ENCODE measurements at regions of chr5 and their contacts with region 1.

Region 1: GRCh38 chr5:94538260-94538659 is 80.1 kb downstream of the KIAA0825 start:
- DNase-seq: no peak
- ATAC-seq: no peak
- H3K4me3 ChIP-seq: no peak overlapping the region
- H3K27ac ChIP-seq: no peak overlapping the region
- H3K4me1 ChIP-seq: no peaks in the 10 kb centered on the region
- H3K27me3 ChIP-seq: no peaks in the 10 kb centered on the region
- CTCF ChIP-seq: no peak

Region 2: DNA sequence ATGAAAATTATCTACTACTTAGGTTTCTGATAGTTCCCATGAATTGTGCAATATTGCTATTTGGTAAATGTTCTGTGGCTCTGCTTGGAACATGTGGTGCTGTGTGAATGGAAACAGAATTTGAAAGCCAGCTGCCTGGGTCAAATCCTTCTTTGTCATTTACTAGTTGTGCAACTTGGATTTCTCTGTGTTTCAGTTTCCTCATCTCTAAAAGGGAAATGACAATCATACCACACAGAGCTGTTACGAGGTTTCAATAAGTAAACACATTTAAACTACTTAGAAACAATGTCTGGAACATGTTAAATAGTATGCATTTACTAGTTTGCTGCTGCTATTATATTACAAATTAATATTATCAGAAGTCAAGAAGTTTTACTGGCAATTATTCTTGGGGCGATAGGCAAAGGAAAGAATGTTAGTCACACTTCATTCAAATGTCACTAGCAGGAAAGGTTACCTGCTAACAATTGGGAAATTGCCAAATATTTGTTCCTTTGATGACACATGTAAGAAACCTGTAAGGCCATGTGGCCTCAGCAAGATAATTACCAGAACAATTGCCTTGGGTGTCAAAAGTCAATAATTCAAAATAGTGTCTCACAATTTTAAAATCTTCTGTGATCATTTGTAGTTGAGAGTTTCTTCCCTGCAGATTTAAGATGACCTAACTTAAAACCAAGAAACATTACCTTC is 104.7 kb before region 1 on chr5:
- intact Hi-C with region 1: no loop called
- DNase-seq: peak in 3 of 6 donors; percentile 12 to 68 (median 24)
- ATAC-seq: peak; percentile 83 to 90 (median 88)
- H3K4me3 ChIP-seq: no peak overlapping the region
- H3K27ac ChIP-seq: peak overlapping the region in 2 of 4 donors; percentile 16 to 70
- H3K4me1 ChIP-seq: peaks cover 5 to 23% (median 7%) of the 10 kb centered on the region in 3 donors
- H3K27me3 ChIP-seq: no peaks in the 10 kb centered on the region
- CTCF ChIP-seq: no peak

Region 3: DNA sequence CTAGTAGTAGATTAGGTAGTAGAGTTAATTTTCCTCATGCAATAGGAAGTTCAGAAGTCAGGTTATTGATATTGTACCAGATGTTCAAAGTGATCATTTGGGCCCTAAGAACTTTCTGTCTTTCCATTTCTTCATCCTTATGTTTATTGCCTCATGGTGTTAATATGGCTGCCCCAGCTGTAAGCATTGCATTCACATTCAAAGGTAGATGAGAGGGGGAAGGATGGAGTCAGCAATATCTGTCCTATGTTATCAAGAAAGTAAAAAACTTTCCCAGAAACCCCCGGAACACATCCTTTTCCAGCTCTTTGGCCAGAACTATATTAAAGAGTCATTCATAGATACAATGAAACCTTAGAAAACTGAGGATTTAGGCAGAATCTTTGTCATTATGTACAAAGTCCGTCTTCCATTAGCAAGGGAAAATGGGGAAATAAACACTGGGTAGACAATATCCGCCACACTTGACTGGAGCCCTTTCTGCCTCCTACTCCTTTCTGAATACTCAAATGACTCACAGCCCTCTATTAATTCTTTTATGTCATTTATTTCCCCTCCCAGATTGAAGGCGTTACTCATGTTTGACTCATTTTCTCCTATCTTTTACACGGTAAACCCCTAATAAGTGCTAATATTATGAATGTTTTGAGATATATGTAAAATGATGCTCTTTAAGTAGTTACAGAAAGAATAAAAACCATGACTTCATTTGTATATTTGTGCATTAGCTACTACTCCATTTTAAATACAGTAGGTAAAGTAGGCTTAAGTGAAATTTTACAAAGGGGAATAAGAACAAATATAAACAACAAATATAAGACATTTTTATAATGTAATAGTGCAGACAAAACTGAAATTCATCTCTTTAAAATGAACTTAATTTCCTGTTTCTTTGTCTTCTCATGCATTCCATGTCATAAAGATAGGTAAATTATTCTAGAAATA is 207.8 kb after region 1 on chr5:
- intact Hi-C with region 1: loop called in 1 of 3 experiments (anchors 10 kb)
- DNase-seq: no peak
- ATAC-seq: no peak
- H3K4me3 ChIP-seq: no peak overlapping the region
- H3K27ac ChIP-seq: no peak overlapping the region
- H3K4me1 ChIP-seq: no peaks in the 10 kb centered on the region
- H3K27me3 ChIP-seq: no peaks in the 10 kb centered on the region
- CTCF ChIP-seq: no peak

Measured in pancreas (tissue), 10 donors.